ENCODE measurements at regions of chr14 and their contacts with region 1.

Region 1: DNA sequence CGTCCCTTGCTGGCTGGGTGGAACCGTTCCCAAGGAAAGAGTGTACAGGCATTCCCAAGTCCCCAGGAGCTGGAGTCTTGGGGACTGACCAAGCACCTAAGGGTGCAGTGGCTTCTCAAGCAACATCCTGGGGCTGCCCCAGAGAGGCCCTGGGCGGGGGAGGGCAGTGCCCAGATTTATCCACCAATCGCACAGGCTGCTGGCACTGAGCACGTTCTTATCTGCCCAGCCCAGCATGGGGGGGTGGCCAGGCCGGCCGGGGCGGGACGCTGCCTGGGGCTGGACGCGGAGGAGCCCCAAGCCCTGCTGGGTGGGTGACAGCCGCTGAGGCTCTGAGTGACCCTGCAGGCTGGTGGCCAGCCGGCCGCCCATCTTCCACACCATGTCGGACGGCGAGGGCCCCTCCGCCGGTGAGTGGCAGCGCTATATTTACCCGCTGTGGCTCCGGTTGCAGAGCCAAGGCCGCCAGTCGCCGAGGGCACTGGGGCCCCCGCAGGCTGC is 53.4 kb downstream of the CYP46A1 start:
- DNase-seq: no peak
- ATAC-seq: peak; percentile 84

Region 2: DNA sequence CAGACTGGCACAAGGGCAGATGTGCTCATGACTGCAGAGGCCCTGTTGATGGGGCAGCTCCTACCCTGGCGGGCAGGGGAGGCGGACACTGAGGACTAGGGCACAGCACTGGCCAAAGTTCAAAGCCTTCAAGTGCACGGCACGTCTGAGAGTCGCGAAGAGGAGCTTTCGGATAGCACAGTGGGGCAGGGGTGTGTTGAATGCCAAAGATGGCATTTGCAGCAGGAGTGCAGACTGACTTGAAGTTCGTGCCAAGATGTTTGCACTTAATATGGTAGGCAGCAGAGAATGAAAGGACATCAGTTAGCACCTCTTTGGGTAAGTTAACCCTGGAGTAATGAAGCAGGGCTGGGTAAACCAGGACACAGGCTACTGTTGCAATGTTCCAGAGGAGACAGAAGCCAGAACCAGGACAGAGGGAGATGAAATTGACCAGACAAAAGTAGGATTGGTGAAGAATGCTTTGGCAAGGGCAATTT is 49.0 kb after region 1 on chr14:
- intact Hi-C with region 1: loop called (anchors 2 kb)
- DNase-seq: no peak
- ATAC-seq: peak; percentile 93